Breast epithelium (tissue), 4 donors: ENCODE measurements at regions of chr12 and their contacts with region 1.

Region 1: DNA sequence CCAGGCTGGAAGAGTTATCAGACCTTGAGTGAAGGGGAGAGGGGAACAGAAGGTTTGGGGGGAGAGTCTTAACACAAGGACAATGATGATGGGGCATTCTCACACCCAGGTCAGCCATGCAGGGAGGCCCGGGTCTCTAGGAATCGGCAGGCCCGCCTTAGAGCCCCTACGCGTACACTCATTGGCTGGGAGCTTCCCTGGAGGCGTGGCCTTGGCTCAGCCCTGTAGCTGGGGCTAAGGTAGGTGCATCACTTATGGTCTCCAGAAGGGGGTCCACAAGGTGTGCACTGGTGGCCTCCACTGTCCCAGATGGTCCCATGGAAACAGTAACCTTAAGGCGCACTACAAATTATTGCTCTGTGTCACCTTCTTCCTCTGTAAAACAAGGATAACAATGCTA is 660.1 kb downstream of the MED13L start:
- DNase-seq: no peak
- H3K4me3 ChIP-seq: no peak overlapping the region
- H3K27ac ChIP-seq: no peak overlapping the region
- H3K4me1 ChIP-seq: no peaks in the 10 kb centered on the region
- H3K27me3 ChIP-seq: no peaks in the 10 kb centered on the region
- CTCF ChIP-seq: no peak
- POLR2A ChIP-seq: no peak

Region 2: GRCh38 chr12:115553622-115554021 is 63.8 kb before region 1 on chr12:
- intact Hi-C with region 1: loop called (anchors 2 kb)
- DNase-seq: peak in 1 of 2 donors; percentile 23
- H3K4me3 ChIP-seq: no peak overlapping the region
- H3K27ac ChIP-seq: peak overlapping the region in 1 of 2 donors; percentile 37
- H3K4me1 ChIP-seq: no peaks in the 10 kb centered on the region
- H3K27me3 ChIP-seq: no peaks in the 10 kb centered on the region
- CTCF ChIP-seq: no peak
- POLR2A ChIP-seq: no peak

Region 3: DNA sequence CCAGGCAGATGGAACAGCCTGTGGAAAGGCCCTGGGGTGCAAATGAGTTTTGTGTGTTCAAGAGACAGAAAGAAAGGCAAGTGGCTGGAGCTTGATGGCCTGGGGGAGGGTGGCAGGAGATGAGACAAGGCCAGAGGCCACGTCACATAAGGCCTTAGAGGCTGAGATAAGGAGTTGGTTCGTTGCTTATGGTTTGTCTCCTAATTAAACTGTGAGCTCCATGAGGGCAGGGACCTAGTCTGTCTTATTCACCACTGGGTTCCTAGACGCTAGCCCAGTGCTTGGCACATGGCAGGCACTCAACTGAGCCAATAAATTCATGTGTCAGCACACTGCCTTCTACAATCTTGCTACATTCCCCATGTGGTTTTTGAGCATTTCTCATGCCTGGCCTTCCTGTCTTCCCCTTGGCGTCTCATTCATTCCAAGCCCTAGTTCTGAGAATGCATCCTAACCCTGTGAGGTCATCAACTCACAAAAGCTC is 752.6 kb after region 1 on chr12:
- intact Hi-C with region 1: no loop called
- DNase-seq: no peak
- H3K4me3 ChIP-seq: no peak overlapping the region
- H3K27ac ChIP-seq: no peak overlapping the region
- H3K4me1 ChIP-seq: no peaks in the 10 kb centered on the region
- H3K27me3 ChIP-seq: no peaks in the 10 kb centered on the region
- CTCF ChIP-seq: no peak
- POLR2A ChIP-seq: no peak